HepG2 (cell line): ENCODE measurements at regions of chr2 and their contacts with region 1.

Region 1: DNA sequence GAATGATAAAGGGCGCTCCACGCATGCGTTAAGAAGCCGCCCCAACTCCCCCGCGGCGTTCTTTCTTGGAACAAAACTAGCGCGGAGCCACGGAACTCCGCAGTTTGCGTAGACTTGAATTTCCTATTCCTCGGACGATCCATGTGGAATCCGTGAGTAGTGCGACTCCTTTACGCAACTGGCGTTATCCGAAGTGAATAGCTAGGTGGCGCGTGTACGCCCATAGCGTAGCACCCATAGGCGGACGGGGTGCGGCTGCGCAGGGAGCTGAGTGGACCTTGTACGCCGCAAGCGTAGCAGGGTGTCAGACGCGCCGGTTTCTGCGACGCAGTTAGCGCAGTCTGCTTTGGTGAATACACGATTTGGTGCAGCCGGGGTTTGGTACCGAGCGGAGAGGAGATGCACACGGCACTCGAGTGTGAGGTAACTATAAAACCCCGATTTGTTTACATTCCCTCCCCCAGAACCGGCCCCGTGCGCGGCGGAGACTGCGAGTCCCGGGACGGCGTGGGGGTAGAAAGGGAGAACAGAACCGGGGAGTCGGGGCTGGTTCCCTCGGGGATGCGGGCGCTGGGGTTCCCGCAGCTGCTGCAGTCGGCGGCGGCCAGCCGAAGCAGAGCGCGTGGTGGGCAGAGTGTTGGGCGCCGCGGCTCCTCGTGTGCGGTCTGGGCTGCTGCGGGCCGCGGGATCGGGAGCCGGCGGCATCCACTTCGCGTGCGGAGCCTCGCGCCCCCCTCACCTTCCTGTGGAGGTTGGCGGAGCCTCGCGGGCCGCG is at the start of gene SLC39A10:
- DNase-seq: peak; percentile 98
- ATAC-seq: peak; percentile 83
- H3K4me3 ChIP-seq: peak within 1 kb of the TSS; percentile 84 to 94 (median 90)
- H3K27ac ChIP-seq: peak within 1 kb of the TSS; percentile 82
- H3K4me1 ChIP-seq: peaks cover 32% of the 10 kb centered on the region
- H3K27me3 ChIP-seq: no peaks in the 10 kb centered on the region
- CTCF ChIP-seq: peak; percentile 58
- EP300 ChIP-seq: no peak
- POLR2A ChIP-seq: peak; percentile 90 to 96
- RAD21 ChIP-seq: peak; percentile 68
- total RNA-seq, gene SLC39A10: 7.2 and 13.2 TPM in 2 replicates

Region 2: DNA sequence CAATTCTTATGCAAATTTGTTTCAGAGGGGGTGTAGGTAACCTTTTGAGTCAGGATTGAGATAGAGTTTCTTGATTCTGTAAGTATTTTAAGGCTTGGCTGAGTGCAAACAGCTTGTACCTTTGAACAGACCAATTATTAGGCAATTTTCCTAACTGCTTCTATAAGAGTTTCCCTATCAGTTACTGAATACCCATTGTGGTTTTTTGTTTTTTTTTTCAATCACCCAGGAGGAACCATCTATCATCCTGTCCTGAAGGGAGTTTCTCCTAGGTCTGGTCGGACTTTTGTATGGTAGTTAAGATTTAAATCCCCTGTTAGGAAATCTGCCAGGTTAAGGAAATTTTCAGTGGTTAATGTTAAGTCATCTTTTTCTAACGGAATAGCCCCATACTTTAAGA is 319.4 kb before region 1 on chr2:
- CTCF ChIA-PET with region 1: no interaction called
- POLR2A ChIA-PET with region 1: no interaction called
- in situ Hi-C with region 1: no loop called
- intact Hi-C with region 1: loop called (anchors 10 kb)
- DNase-seq: no peak
- ATAC-seq: no peak
- H3K4me3 ChIP-seq: no peak overlapping the region
- H3K27ac ChIP-seq: no peak overlapping the region
- H3K4me1 ChIP-seq: no peaks in the 10 kb centered on the region
- H3K27me3 ChIP-seq: no peaks in the 10 kb centered on the region
- CTCF ChIP-seq: no peak
- EP300 ChIP-seq: no peak
- POLR2A ChIP-seq: no peak
- RAD21 ChIP-seq: no peak

Region 3: DNA sequence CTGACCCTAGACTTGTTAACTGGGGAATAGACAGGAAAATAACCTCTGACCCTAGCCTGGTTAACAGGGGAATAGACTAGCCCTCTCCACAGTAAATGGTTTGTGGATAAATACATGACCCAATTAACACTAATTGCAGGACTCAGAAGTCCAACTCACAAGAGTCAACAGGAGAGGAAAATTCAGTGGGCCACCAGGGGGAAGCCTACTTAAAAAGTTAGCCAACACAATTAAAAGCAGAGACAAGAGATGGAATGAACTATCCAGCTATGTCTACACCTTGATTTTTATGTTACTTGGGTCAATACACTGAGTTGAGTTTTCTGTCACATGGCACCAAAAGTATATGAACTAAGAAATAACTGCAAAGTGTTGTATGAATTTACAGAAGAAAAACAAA is 158.9 kb before region 1 on chr2:
- CTCF ChIA-PET with region 1: interaction called, 17 read pairs
- POLR2A ChIA-PET with region 1: interaction called, 3 read pairs
- in situ Hi-C with region 1: no loop called
- intact Hi-C with region 1: loop called (anchors 1 kb)
- DNase-seq: peak; percentile 50
- ATAC-seq: peak; percentile 72
- H3K4me3 ChIP-seq: no peak overlapping the region
- H3K27ac ChIP-seq: no peak overlapping the region
- H3K4me1 ChIP-seq: no peaks in the 10 kb centered on the region
- H3K27me3 ChIP-seq: 0 out of 5 replicates have a peak, but pooled peaks cover 0 to 3% of the 10 kb centered on the region in 2 experiments
- CTCF ChIP-seq: peak; percentile 52
- EP300 ChIP-seq: no peak
- POLR2A ChIP-seq: no peak
- RAD21 ChIP-seq: no peak

Region 4: DNA sequence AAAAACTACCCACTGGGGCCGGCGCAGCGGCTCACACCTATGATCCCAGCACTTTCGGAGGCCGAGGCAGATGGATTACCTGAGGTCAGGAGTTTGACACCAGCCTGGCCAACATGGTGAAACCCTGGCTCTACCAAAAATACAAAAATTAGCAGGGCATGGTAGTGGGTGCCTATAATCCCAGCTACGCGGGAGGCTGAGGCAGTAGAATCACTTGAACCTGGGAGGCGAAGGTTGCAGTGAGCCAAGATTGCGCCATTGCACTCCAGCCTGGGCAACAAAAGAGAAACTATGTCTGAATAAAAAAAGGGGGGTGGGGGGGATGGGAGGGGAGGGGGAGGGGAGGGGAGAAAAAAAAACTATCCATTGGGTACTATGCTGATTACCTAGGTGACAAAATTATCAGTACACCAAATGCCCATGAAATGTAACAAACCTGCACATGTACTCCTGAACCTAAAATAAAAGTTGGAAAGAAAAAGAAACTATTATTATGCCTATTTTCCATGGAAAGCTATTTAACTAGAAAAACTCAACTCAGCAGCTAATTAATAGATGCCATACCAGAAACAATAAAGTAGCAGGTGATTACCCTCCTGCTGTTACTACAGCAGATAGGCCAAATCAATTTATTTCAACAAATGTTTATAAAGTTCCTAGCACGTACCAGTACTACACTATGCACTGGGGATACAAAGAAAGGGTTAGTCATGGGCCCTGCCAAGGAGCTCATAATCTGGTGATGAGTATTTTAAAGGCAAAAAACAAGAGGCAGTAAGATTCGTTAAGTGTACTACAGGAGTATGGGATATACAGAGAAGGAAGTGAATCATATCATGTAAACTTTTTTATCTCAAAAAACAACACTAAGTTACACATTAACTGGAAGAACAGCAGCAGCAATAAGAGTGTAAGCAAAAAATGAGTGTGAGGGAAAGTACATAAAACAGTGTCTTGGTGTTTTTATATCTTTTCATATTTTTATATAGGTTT is 112.8 kb before region 1 on chr2:
- CTCF ChIA-PET with region 1: no interaction called
- POLR2A ChIA-PET with region 1: interaction called, 12 read pairs
- in situ Hi-C with region 1: no loop called
- intact Hi-C with region 1: loop called (anchors 5 kb)
- DNase-seq: peak; percentile 44
- ATAC-seq: peak; percentile 92
- H3K4me3 ChIP-seq: peak overlapping the region in 1 of 3 experiments; percentile 11; a peak in 2 of 6 replicates
- H3K27ac ChIP-seq: no peak overlapping the region
- H3K4me1 ChIP-seq: peaks cover 19% of the 10 kb centered on the region
- H3K27me3 ChIP-seq: no peaks in the 10 kb centered on the region
- CTCF ChIP-seq: no peak
- EP300 ChIP-seq: peak in 1 of 2 experiments; percentile 65; a peak in 1 of 4 replicates
- POLR2A ChIP-seq: no peak
- RAD21 ChIP-seq: no peak

Region 5: DNA sequence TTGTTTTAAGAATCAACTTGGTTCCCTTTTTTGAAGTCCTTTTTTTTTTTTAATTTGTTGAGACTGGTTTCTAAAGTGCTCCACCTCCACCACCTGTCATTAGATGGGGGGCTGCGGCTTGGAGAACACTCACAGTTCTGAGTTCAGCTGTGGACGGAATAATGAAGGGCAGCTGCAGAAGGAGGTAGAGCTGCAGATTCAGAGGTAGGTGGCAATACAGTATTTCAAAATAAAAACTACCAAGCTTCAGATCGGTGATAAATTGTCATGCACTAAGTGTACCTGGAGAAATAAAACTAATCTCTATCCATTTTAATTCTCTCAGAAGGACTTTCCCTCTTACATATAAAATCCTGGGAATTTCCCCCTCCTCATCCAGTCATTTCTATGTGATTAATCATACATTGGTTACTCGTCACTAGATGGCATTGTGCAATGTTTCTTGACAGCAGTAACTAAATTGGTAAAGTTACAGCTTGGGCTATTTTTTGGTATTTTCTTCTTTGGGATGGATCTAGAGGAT is 81.1 kb before region 1 on chr2:
- CTCF ChIA-PET with region 1: no interaction called
- POLR2A ChIA-PET with region 1: no interaction called
- in situ Hi-C with region 1: no loop called
- intact Hi-C with region 1: loop called (anchors 1 kb)
- DNase-seq: peak; percentile 27
- ATAC-seq: no peak
- H3K4me3 ChIP-seq: no peak overlapping the region
- H3K27ac ChIP-seq: no peak overlapping the region
- H3K4me1 ChIP-seq: no peaks in the 10 kb centered on the region
- H3K27me3 ChIP-seq: no peaks in the 10 kb centered on the region
- CTCF ChIP-seq: peak; percentile 53
- EP300 ChIP-seq: no peak
- POLR2A ChIP-seq: no peak
- RAD21 ChIP-seq: no peak

Region 6: GRCh38 chr2:196068271-196069209 is 411.5 kb after region 1 on chr2 and contains the start of gene DNAH7:
- CTCF ChIA-PET with region 1: no interaction called
- POLR2A ChIA-PET with region 1: no interaction called
- in situ Hi-C with region 1: loop called (anchors 5 kb)
- intact Hi-C with region 1: loop called (anchors 5 kb)
- DNase-seq: peak; percentile 70
- ATAC-seq: peak; percentile 97
- H3K4me3 ChIP-seq: peak within 1 kb of the TSS; percentile 56 to 89 (median 78)
- H3K27ac ChIP-seq: peak within 1 kb of the TSS; percentile 48
- H3K4me1 ChIP-seq: peaks cover 10% of the 10 kb centered on the region
- H3K27me3 ChIP-seq: no peaks in the 10 kb centered on the region
- CTCF ChIP-seq: peak; percentile 98
- EP300 ChIP-seq: no peak
- POLR2A ChIP-seq: 0 out of 4 replicates have a peak, but pooled peaks of 1 of the 2 experiments have one; percentile 48
- RAD21 ChIP-seq: peak; percentile 67
- total RNA-seq, gene DNAH7: 0.07 and 0.09 TPM in 2 replicates